Psoas muscle (tissue), 8 donors: ENCODE measurements at regions of chr11 and their contacts with region 1.

Region 1: DNA sequence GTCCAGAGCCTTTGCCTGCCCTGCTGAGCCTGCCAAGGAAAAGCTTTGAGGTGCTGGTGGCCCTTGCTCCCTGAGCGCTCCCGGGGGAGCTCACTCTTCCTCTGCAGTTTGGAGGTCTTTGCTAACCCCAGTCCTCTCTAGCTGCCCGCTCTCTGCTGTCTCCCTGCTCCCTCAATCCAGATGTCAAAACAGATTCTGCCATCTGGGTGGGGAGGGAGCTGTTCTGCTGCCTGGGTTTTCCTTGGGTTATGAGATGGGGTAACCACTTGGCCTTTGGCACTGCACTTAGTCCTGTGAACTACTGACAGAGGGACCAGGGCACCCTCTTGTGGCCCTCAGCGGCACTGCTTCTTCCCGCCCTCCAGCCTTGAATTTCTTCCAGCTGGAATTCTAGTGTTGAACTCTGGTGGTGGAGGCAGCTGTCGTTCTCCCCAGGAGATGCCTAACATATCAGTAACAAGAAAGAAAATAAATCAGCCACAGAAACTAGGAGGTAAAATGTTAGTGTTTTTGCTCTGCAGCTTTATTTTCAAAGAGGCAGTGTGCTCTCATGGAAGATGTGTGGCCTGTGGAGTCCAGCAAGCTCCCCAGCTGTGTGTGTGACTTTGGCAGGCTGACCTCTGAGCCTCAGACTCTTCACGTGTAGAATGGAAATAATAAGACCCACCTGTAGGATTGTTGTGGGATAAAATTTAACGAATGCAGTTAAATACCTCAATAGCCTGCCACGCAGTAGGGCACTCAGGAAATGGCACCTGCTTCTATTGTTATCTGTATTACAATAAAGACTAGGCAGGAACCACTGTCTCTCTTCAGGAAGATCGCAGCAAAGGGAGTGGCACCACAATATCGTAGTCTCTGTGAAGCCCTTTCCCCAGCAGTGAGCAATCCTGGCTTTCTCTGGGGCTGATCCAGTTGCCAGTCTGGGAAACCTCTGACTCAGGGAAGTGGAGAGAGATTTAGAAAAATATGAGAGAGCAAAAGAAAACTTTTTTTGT is 23.4 kb downstream of the ARFGAP2 start:
- DNase-seq: peak; percentile 81 to 89
- ATAC-seq: peak; percentile 78 to 88 (median 82)
- H3K4me3 ChIP-seq: no peak overlapping the region
- H3K27ac ChIP-seq: peak overlapping the region; percentile 71
- H3K4me1 ChIP-seq: peaks cover 19% of the 10 kb centered on the region
- H3K27me3 ChIP-seq: no peaks in the 10 kb centered on the region
- CTCF ChIP-seq: peak; percentile 95

Region 2: GRCh38 chr11:46845740-46846509 is 307.3 kb before region 1 on chr11 and contains the start of gene CKAP5:
- intact Hi-C with region 1: no loop called
- DNase-seq: peak; percentile 89 to 94
- ATAC-seq: peak; percentile 96 to 99 (median 98)
- H3K4me3 ChIP-seq: peak within 1 kb of the TSS; percentile 86
- H3K27ac ChIP-seq: peak within 1 kb of the TSS; percentile 85
- H3K4me1 ChIP-seq: peaks cover 22% of the 10 kb centered on the region
- H3K27me3 ChIP-seq: no peaks in the 10 kb centered on the region
- CTCF ChIP-seq: no peak
- total RNA-seq, gene CKAP5: 86.4 to 160 (median 119) TPM

Region 3: DNA sequence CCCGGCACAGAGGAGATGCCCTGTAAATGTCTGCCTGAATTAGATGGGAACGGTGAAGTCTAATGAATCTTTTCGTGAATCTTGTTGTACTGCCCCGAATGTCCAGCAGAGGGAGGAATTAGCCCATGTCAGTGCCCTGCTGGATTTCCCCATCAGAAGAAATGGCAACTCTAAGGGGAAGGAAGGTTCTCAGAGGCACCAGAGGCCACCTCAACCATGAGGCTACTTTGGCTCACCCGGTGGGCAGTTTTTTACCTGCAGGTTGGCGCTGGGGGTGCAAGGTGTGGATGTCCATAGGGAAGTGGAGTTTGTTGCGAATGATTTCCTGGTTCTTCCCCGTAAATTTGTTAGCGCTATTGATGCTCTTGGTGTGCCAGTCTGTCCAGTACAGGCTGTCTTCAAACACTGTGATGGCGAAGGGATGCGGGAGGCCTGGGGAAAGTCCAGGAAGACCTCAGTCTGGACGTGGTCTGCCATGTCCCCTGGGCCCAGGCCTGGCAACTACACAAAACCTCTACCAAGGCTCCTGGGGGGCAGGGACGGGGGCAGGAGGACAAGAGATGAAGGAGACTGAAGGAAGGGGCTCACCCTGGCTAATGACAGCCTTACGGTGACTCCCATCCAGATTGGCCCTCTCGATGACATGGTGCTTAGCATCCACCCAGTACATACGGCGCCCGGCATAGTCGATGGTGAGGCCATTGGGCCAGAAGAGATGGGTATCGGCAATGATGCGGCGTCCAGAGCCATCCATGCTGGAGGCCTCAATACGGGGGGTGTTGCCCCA is 263.4 kb before region 1 on chr11:
- intact Hi-C with region 1: loop called (anchors 2 kb)
- DNase-seq: peak; percentile 28 to 65
- ATAC-seq: peak; percentile 80 to 94 (median 91)
- H3K4me3 ChIP-seq: no peak overlapping the region
- H3K27ac ChIP-seq: no peak overlapping the region
- H3K4me1 ChIP-seq: no peaks in the 10 kb centered on the region
- H3K27me3 ChIP-seq: no peaks in the 10 kb centered on the region
- CTCF ChIP-seq: peak; percentile 87

Region 4: GRCh38 chr11:46916286-46917108 is 236.8 kb before region 1 on chr11:
- intact Hi-C with region 1: loop called in 1 of 2 experiments (anchors 5 kb)
- DNase-seq: peak; percentile 69 to 83
- ATAC-seq: peak; percentile 57 to 65 (median 61)
- H3K4me3 ChIP-seq: peak overlapping the region; percentile 90
- H3K27ac ChIP-seq: peak overlapping the region; percentile 91
- H3K4me1 ChIP-seq: peaks cover 63% of the 10 kb centered on the region
- H3K27me3 ChIP-seq: no peaks in the 10 kb centered on the region
- CTCF ChIP-seq: peak; percentile 21

Region 5: DNA sequence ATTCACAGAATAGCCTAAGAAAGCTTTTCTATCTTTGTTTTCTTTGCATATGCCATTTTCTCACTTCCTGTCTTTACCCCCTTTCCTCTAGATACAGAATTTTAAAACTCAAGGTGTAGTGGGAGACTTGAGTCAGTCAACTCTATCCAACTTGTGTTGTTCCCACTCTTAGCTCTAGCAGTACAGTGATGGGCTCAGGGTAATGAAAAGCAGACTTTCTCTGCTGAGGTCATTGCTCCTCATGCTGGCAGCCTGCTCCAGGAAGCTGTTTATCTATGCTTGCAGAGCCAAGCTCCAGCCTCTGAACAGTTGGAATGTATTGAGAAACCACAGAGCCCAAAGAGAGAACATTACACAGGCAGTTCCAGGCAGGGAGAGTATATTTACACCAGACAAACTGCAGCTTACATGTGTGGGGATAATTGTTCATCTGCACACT is 148.6 kb before region 1 on chr11:
- intact Hi-C with region 1: loop called in 1 of 2 experiments (anchors 5 kb)
- DNase-seq: peak; percentile 71 to 86
- ATAC-seq: peak; percentile 99 to 100 (median 100)
- H3K4me3 ChIP-seq: no peak overlapping the region
- H3K27ac ChIP-seq: peak overlapping the region; percentile 77
- H3K4me1 ChIP-seq: peaks cover 19% of the 10 kb centered on the region
- H3K27me3 ChIP-seq: no peaks in the 10 kb centered on the region
- CTCF ChIP-seq: no peak